Sigmoid colon (tissue), 7 donors: ENCODE measurements at regions of chr3 and their contacts with region 1.

Region 1: GRCh38 chr3:161220850-161221753 is at the start of gene NMD3:
- DNase-seq: peak; percentile 97
- H3K4me3 ChIP-seq: peak within 1 kb of the TSS; percentile 83 to 97 (median 94)
- H3K27ac ChIP-seq: peak within 1 kb of the TSS; percentile 90 to 97 (median 92)
- H3K4me1 ChIP-seq: peaks cover 0 to 35% (median 19%) of the 10 kb centered on the region in 4 donors
- H3K27me3 ChIP-seq: no peaks in the 10 kb centered on the region
- CTCF ChIP-seq: no peak
- EP300 ChIP-seq: peak in 1 of 4 donors; percentile 7
- POLR2A ChIP-seq: peak; percentile 65 to 67
- total RNA-seq, gene NMD3: 42.4 to 58.3 (median 49.7) TPM

Region 2: DNA sequence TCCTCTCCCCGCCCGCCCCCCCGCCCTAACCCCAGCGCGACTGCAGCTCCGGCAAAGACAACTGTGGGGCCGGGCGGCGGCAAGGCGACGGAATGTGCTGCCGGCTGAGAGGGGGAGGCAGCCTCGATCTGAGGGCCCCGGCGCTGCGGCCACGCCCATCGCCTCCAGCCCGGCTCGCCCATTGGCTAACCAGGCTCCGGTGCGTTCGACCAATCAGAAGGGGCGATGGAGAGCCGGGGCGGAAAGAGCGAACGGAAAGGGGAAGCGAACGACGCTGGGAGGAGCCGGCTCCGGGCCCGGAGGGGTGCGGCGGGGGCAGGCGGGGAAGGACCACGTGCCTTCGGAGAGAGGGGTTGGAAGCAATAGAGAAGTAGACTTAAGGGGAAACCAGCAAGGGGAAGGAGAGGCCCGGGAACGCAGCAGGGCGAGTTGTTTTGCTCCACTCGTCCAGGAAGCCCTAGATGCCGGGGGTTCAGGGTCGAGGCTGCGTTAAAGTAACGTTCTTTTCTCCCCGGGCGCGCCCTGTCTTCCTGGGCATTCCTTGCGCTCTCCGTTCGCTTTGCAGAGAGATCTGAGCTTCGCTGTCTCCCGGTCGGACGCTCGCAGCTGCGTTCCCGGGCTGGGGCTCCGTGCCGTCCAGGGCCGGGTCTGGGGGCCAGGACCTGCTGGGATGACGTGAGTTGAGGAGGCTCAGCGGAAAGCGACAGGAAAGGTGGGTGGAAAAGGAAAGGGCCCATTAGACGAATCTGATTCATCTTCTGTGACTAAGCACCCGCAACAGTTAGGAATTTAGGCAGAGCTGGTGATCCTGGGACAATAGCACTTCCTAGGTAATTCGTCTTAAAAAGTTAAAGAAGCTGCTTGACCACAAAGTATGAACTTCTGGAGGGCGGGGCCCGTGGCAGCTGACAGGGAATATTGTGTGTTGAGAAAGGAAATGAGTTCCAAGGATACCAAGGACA is 655.4 kb before region 1 on chr3 and contains the start of gene KPNA4:
- intact Hi-C with region 1: loop called (anchors 5 kb)
- DNase-seq: peak; percentile 99
- H3K4me3 ChIP-seq: peak within 1 kb of the TSS; percentile 86 to 93 (median 88)
- H3K27ac ChIP-seq: peak within 1 kb of the TSS; percentile 98 to 99 (median 99)
- H3K4me1 ChIP-seq: peaks cover 0 to 50% (median 31%) of the 10 kb centered on the region in 4 donors
- H3K27me3 ChIP-seq: no peaks in the 10 kb centered on the region
- CTCF ChIP-seq: no peak
- EP300 ChIP-seq: no peak
- POLR2A ChIP-seq: peak; percentile 53 to 70
- total RNA-seq, gene KPNA4: 45.4 to 52.8 (median 49.2) TPM

Region 3: GRCh38 chr3:161559177-161559998 is 338.3 kb after region 1 on chr3:
- intact Hi-C with region 1: no loop called
- DNase-seq: no peak
- H3K4me3 ChIP-seq: no peak overlapping the region
- H3K27ac ChIP-seq: no peak overlapping the region
- H3K4me1 ChIP-seq: peaks cover 0 to 10% (median 6%) of the 10 kb centered on the region in 4 donors
- H3K27me3 ChIP-seq: no peaks in the 10 kb centered on the region
- CTCF ChIP-seq: peak in 3 of 4 experiments; percentile 37 to 59 (median 44)
- EP300 ChIP-seq: no peak
- POLR2A ChIP-seq: no peak